Activated CD4-positive, alpha-beta T cell treated with anti-CD3 and anti-CD28 coated beads for 36 hours (primary cell): ENCODE measurements at regions of chr3 and their contacts with region 1.

Region 1: DNA sequence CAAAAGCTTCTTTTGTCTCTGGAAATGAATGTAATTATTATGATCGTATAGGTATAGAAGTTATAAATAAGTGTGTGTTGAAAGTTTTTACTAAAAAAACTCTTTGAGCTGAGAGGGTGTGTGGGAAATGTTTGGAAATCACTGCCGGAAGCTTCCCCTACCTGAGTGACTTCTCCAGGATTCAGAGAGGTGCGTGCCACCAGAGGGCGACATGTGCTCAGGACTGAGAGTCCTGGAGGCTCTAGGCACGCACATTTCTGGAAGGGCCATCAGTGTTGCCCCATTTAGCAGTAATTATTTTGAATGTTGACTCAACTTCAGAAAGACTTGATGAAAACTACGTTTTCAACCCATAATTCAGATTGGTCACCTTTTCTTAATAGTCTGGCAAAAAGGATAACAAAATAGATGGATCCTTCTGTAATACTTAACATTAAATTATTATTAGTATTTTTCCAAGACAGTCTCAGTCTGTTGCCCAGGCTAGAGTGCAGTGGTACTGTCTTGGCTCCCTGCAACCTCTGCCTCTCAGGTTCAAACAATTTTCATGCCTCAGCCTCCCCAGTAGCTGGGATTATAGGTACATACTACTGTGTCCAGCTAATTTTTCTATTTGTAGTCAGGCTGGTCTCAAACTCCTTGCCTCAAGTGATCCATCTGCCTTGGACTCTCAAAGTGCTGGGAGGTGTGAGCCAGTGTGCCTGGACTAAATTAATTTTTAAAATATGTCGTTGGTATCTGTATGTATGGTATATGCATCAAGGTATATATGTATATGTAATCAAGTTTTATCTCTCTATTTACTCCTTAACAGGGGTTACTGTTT is 34.5 kb downstream of the GPR171 start:
- DNase-seq: peak; percentile 92
- ATAC-seq: peak; percentile 64
- H3K4me3 Mint-ChIP-seq: no peak overlapping the region
- H3K27ac Mint-ChIP-seq: no peak overlapping the region
- H3K4me1 Mint-ChIP-seq: peaks cover 44% of the 10 kb centered on the region
- H3K27me3 Mint-ChIP-seq: no peaks in the 10 kb centered on the region

Region 2: GRCh38 chr3:151183265-151183671 is 14.8 kb after region 1 on chr3:
- CTCF ChIA-PET with region 1: interaction called, 13 read pairs
- POLR2A ChIA-PET with region 1: no interaction called
- intact Hi-C with region 1: loop called in 1 of 2 experiments (anchors 2 kb)
- DNase-seq: no peak
- ATAC-seq: peak; percentile 59
- H3K4me3 Mint-ChIP-seq: peak overlapping the region; percentile 63
- H3K27ac Mint-ChIP-seq: peak overlapping the region; percentile 87
- H3K4me1 Mint-ChIP-seq: peaks cover 42% of the 10 kb centered on the region
- H3K27me3 Mint-ChIP-seq: no peaks in the 10 kb centered on the region

Region 3: GRCh38 chr3:151219056-151219455 is 50.6 kb after region 1 on chr3:
- CTCF ChIA-PET with region 1: interaction called, 30 read pairs
- POLR2A ChIA-PET with region 1: no interaction called
- intact Hi-C with region 1: no loop called
- DNase-seq: no peak
- ATAC-seq: peak; percentile 90
- H3K4me3 Mint-ChIP-seq: no peak overlapping the region
- H3K27ac Mint-ChIP-seq: no peak overlapping the region
- H3K4me1 Mint-ChIP-seq: peaks cover 25% of the 10 kb centered on the region
- H3K27me3 Mint-ChIP-seq: no peaks in the 10 kb centered on the region

Region 4: GRCh38 chr3:151268267-151269235 is 100.1 kb after region 1 on chr3:
- CTCF ChIA-PET with region 1: interaction called, 11 read pairs
- POLR2A ChIA-PET with region 1: no interaction called
- intact Hi-C with region 1: no loop called
- DNase-seq: peak; percentile 56
- ATAC-seq: peak; percentile 86
- H3K4me3 Mint-ChIP-seq: peak overlapping the region; percentile 13
- H3K27ac Mint-ChIP-seq: peak overlapping the region; percentile 53
- H3K4me1 Mint-ChIP-seq: peaks cover 11% of the 10 kb centered on the region
- H3K27me3 Mint-ChIP-seq: no peaks in the 10 kb centered on the region

Region 5: DNA sequence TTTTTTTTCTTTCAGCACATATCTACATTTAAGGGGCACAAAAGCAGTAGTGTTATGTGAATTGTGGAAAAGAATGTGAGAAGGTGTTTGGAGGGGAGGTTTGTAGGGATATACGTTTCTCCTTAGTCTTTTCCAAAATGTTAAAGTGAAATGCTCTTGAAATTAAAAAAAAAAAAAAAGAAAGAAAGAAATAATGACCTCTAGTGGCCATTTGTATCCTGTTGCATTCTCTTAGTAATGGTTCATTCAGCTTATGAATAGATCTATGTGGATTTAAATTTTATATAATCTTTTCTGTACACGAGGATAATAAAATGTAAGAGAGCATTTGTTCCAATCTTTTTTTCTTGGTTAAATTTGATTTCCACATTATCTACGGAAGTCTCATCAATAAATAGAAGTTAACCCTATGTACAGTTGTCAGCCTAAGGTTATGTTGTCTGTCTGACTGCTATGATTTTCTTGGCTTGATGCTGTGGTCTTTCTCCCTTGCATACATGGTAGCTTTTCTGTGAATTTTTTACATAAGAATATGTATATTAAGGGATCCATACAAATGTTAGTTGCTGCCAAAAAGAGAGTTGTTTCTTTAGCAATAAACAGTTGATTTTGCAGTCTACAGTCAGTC is 159.2 kb after region 1 on chr3:
- CTCF ChIA-PET with region 1: interaction called, 20 read pairs
- POLR2A ChIA-PET with region 1: no interaction called
- intact Hi-C with region 1: loop called (anchors 1 to 2 kb)
- DNase-seq: no peak
- ATAC-seq: peak; percentile 17
- H3K4me3 Mint-ChIP-seq: no peak overlapping the region
- H3K27ac Mint-ChIP-seq: no peak overlapping the region
- H3K4me1 Mint-ChIP-seq: peaks cover 25% of the 10 kb centered on the region
- H3K27me3 Mint-ChIP-seq: peaks cover 10% of the 10 kb centered on the region

Region 6: DNA sequence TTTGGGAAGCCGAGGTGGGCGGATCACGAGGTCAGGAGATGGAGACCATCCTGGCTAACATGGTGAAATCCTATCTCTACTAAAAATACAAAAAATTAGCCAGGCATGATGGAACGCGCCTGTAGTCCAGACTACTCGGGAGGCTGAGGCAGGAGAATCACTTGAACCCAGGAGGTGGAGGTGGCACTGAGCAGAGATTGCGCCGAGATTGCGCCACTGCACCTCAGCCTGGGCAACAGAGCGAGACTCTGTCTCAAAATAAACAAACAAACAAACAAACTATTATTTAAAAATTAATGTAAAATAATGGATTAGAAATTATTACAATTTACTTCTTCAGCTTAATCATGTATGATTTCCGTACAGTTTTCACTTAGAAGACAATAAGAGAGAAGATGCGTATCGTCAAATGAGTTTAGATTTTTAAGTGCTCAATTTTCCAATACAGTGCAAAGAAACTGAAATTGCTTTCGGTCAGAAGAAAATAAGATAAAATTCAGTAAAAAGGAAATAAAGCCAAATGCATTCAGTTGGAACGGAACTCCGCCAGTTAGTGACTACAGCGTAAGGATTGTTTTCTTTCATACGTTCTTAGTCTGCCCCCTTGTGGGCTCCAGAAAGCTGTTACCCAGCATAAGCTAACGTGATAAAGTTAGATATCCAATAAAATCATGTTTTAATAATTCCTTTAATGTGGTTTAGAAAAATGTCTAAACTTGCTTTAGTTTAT is 670.3 kb after region 1 on chr3:
- CTCF ChIA-PET with region 1: interaction called, 6 read pairs
- POLR2A ChIA-PET with region 1: no interaction called
- intact Hi-C with region 1: loop called (anchors 2 to 5 kb)
- DNase-seq: peak; percentile 56
- ATAC-seq: peak; percentile 69
- H3K4me3 Mint-ChIP-seq: no peak overlapping the region
- H3K27ac Mint-ChIP-seq: no peak overlapping the region
- H3K4me1 Mint-ChIP-seq: peaks cover 3% of the 10 kb centered on the region
- H3K27me3 Mint-ChIP-seq: peaks cover 7% of the 10 kb centered on the region